Activated CD4-positive, alpha-beta T cell treated with anti-CD3 and anti-CD28 coated beads for 36 hours (primary cell): ENCODE measurements at regions of chr1 and their contacts with region 1.

Region 1: DNA sequence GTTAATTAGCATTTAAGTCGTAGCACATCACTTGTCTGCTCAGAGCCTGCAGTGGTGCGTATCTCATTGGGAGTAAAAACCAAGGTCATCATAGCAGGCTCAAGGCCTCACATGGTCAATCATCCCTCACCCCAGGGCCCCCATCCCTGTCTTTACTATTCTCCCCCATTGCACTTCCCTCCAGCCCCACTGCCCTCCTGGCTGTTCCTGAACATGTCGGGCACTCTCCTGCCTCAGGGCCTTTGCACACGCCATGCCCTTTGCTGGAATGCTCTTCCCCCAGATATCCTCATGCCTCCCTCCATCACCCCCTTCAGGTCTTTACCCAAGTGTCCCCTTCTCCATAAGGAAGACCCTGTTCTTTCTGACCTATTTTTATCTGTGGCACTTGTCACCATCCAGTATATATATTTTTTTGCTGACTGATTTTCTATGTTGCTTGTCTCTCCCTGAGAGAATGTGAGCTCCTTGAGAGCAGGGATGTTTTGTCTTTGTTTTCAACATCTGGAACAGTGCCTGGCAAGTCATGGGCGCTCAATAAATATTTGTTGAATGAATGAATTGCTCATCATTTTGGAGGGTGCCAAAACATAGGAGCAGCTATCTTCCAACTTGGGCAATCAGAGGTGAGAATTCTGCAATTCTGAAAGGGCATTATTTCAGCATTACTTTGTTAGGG is 74.1 kb upstream of the POU3F1 start:
- DNase-seq: no peak
- ATAC-seq: no peak
- H3K4me3 Mint-ChIP-seq: no peak overlapping the region
- H3K27ac Mint-ChIP-seq: no peak overlapping the region
- H3K4me1 Mint-ChIP-seq: no peaks in the 10 kb centered on the region
- H3K27me3 Mint-ChIP-seq: peaks cover 3% of the 10 kb centered on the region

Region 2: DNA sequence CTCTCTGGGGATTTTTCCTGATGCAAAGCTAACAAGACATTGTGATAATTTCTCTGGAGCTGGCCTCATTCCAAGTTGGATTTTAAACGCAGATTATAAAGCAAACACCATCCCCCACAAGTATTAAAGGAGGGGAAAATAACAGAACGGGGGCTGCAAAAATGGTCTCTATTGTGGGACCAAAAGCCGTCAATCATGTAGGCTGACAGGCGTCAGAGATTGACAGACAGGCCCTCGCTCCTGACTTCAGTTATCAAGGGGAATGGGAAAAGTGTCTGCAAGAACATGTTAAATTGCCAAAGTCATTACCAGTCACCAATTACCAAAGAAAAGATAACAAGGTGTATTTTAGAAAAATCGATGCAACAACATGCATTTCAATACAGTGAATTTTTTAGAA is 233.3 kb after region 1 on chr1:
- CTCF ChIA-PET with region 1: no interaction called
- POLR2A ChIA-PET with region 1: interaction called, 10 read pairs
- intact Hi-C with region 1: no loop called
- DNase-seq: no peak
- ATAC-seq: no peak
- H3K4me3 Mint-ChIP-seq: no peak overlapping the region
- H3K27ac Mint-ChIP-seq: no peak overlapping the region
- H3K4me1 Mint-ChIP-seq: no peaks in the 10 kb centered on the region
- H3K27me3 Mint-ChIP-seq: peaks cover 5% of the 10 kb centered on the region